Panc1 (cell line): ENCODE measurements at regions of chr1 and their contacts with region 1.

Region 1: GRCh38 chr1:199373139-199373538 is 654.4 kb upstream of the NR5A2 start:
- DNase-seq: no peak
- ATAC-seq: no peak
- H3K4me3 ChIP-seq: no peak overlapping the region
- H3K27ac ChIP-seq: no peak overlapping the region
- H3K4me1 ChIP-seq: no peaks in the 10 kb centered on the region
- H3K27me3 ChIP-seq: no peaks in the 10 kb centered on the region
- CTCF ChIP-seq: no peak

Region 2: GRCh38 chr1:199135901-199136300 is 237.2 kb before region 1 on chr1:
- CTCF ChIA-PET with region 1: no interaction called
- POLR2A ChIA-PET with region 1: interaction called, 13 read pairs
- in situ Hi-C with region 1: no loop called
- intact Hi-C with region 1: no loop called
- DNase-seq: no peak
- ATAC-seq: no peak
- H3K4me3 ChIP-seq: no peak overlapping the region
- H3K27ac ChIP-seq: no peak overlapping the region
- H3K4me1 ChIP-seq: no peaks in the 10 kb centered on the region
- H3K27me3 ChIP-seq: no peaks in the 10 kb centered on the region
- CTCF ChIP-seq: no peak

Region 3: DNA sequence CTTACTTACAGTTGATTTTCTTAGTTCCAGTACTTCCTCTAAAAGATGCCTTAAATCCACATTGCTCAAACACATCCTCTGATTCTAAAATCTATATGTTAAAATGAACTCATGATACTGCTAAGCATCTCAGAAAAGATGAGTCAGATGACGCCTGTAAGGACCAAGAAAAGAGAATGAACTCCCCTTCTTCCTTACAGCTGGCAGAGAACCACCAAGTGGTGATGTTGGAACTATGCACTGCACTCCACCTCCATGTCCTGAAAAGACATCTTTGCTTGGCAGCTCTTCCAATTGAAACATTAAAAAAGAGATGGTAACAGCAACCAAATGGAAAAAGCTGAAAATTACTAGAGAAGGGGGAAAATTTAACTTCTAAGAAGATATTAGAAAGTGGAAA is 85.5 kb before region 1 on chr1:
- CTCF ChIA-PET with region 1: no interaction called
- POLR2A ChIA-PET with region 1: no interaction called
- in situ Hi-C with region 1: no loop called
- intact Hi-C with region 1: no loop called
- DNase-seq: no peak
- ATAC-seq: no peak
- H3K4me3 ChIP-seq: no peak overlapping the region
- H3K27ac ChIP-seq: no peak overlapping the region
- H3K4me1 ChIP-seq: no peaks in the 10 kb centered on the region
- H3K27me3 ChIP-seq: no peaks in the 10 kb centered on the region
- CTCF ChIP-seq: no peak